Activated CD4-positive, alpha-beta T cell treated with anti-CD3 and anti-CD28 coated beads, Interleukin-2, amount 10 ng/mL, durations not matched to agents 24 days and 14 days (primary cell): ENCODE measurements at regions of chr22 and their contacts with region 1.

Region 1: DNA sequence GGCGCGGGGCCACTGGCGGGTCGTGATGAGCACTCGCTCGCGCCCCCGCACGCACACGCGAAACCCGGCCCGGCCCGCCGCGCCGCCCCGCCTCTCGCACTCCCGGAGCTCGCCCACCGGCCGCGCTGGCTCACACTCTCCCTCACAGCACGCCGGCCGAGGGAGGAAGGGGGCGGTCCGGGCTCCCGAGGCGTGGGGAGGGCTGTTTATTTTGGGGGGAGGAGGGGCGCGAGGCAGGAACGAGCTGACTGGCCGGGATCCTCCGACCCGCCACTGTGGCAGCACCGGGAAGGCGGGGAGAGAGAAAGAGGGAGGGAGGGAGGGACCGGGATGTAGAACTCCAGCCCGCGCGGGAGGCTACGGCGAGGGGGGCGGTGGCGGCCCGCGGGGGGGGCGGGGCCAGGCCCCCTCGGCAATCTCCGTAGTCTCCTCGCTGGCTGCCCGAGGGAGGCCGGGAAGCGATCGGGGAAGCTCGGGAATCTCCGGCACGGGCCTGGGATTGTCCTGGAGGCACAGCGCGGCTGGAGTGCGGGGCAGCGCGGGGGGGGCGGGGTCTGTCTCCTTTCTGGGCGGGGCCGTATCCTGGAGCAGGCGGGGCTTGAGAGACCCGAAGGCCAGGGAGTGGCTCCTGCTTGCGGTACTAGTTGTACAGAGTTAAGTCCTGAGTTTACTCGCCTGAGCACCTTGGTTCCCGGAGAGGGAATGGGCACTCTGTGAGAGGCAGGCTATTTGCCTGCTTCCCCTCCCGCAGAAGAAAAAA is at the start of gene RBFOX2:
- DNase-seq: peak; percentile 91
- H3K4me3 Mint-ChIP-seq: peak within 1 kb of the TSS; percentile 89
- H3K27ac Mint-ChIP-seq: peak within 1 kb of the TSS; percentile 70
- H3K4me1 Mint-ChIP-seq: peaks cover 14% of the 10 kb centered on the region
- H3K27me3 Mint-ChIP-seq: peaks cover 46% of the 10 kb centered on the region
- total RNA-seq, gene RBFOX2: 3.6 and 3.9 TPM in 2 replicates

Region 2: GRCh38 chr22:36052505-36053270 is 23.9 kb after region 1 on chr22:
- intact Hi-C with region 1: no loop called
- DNase-seq: no peak
- H3K4me3 Mint-ChIP-seq: no peak overlapping the region
- H3K27ac Mint-ChIP-seq: no peak overlapping the region
- H3K4me1 Mint-ChIP-seq: peaks cover 4% of the 10 kb centered on the region
- H3K27me3 Mint-ChIP-seq: peaks cover 11% of the 10 kb centered on the region

Region 3: DNA sequence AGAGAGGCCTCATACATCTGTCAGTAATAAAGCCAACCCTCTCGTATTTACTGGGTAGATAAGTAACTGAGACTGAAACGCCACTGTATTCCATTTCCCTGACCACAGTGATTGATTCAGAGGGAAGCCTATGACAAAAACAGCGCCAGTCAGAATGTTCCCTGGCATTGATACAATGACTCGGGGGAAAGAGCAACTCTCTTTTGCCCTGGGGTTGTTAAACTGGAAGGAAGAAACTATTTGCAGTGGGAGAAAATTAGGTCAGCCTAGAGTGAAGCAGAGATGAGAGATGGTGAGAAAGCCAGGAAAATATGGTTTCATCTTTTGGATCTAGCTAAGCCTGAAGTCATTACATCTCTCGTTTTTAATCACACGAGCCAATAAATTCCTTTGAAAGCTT is 48.4 kb after region 1 on chr22:
- intact Hi-C with region 1: loop called (anchors 10 kb)
- DNase-seq: no peak
- H3K4me3 Mint-ChIP-seq: no peak overlapping the region
- H3K27ac Mint-ChIP-seq: no peak overlapping the region
- H3K4me1 Mint-ChIP-seq: peaks cover 2% of the 10 kb centered on the region
- H3K27me3 Mint-ChIP-seq: no peaks in the 10 kb centered on the region